ENCODE measurements at regions of chr9 and their contacts with region 1.

Region 1: DNA sequence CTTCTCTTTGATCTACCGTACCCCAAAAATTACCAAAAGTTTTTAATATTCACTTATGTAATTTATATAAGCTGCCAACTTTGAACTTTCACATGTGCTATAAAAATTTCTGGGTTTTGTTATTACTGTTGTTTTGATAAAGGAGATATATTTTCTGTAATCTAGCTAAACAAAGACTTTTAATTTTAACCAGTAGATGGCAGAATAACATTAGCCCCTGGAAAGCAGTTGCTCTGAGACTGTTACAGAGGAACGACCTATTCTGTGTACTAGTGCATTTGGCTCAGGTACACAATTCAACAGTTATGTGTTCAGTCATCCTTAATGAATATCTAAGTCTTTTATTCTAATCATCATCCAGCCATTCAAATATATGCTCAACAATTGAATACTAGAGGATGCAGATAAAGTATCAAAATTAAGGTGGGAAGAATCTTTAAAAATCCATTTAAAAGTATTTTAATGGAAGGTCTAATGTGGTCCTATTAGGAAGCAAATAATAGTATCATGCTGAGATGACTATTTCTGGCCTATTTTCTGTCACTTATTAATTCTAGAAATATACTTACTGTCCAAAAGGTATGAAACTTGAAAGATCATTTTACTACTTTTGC is 8.6 kb downstream of the KLHL9 start:
- DNase-seq: no peak
- H3K4me3 ChIP-seq: no peak overlapping the region
- H3K27ac ChIP-seq: no peak overlapping the region
- H3K4me1 ChIP-seq: peaks cover 0 to 49% (median 13%) of the 10 kb centered on the region in 4 donors
- H3K27me3 ChIP-seq: no peaks in the 10 kb centered on the region
- CTCF ChIP-seq: peak; percentile 60 to 63

Region 2: DNA sequence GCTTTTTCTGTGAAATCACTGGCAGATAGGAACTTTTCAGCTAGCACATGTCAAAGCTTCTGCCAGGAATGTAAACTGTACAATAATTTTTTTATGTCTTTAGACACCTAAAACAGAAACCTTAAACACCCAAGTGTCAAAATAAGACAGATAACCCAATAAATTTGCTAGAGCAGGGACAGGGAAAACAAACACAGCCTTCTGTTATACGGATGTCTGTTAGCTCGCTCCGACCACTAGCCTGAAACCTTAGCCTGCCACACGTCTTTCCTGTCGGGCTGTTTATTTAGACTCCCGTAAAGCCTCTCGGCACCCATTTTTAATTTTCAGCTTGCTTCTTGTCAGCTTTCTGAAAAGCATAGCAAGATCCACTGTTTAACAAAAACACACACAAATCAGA is 1182.4 kb before region 1 on chr9:
- intact Hi-C with region 1: no loop called
- DNase-seq: no peak
- H3K4me3 ChIP-seq: no peak overlapping the region
- H3K27ac ChIP-seq: no peak overlapping the region
- H3K4me1 ChIP-seq: no peaks in the 10 kb centered on the region
- H3K27me3 ChIP-seq: no peaks in the 10 kb centered on the region
- CTCF ChIP-seq: no peak

Region 3: DNA sequence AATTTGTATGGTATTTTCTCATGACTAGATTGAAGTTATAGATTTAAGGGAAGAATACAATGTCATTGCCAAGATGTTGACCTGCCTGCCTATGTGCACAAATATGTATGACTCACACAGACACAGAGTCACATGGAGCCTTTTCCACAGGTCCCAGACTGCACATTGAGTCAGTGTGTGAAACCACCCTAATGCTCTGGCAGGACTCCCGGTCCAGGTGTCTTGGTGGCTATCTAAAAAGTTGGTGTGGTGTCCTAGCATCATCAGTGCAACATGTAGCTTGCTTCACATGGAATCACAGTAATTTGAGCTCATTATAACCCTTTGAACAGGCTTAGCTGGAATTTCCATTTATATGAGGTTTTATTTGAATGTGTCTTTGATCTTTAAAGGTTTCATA is 32.3 kb before region 1 on chr9:
- intact Hi-C with region 1: no loop called
- DNase-seq: no peak
- H3K4me3 ChIP-seq: no peak overlapping the region
- H3K27ac ChIP-seq: no peak overlapping the region
- H3K4me1 ChIP-seq: no peaks in the 10 kb centered on the region
- H3K27me3 ChIP-seq: no peaks in the 10 kb centered on the region
- CTCF ChIP-seq: no peak

Region 4: DNA sequence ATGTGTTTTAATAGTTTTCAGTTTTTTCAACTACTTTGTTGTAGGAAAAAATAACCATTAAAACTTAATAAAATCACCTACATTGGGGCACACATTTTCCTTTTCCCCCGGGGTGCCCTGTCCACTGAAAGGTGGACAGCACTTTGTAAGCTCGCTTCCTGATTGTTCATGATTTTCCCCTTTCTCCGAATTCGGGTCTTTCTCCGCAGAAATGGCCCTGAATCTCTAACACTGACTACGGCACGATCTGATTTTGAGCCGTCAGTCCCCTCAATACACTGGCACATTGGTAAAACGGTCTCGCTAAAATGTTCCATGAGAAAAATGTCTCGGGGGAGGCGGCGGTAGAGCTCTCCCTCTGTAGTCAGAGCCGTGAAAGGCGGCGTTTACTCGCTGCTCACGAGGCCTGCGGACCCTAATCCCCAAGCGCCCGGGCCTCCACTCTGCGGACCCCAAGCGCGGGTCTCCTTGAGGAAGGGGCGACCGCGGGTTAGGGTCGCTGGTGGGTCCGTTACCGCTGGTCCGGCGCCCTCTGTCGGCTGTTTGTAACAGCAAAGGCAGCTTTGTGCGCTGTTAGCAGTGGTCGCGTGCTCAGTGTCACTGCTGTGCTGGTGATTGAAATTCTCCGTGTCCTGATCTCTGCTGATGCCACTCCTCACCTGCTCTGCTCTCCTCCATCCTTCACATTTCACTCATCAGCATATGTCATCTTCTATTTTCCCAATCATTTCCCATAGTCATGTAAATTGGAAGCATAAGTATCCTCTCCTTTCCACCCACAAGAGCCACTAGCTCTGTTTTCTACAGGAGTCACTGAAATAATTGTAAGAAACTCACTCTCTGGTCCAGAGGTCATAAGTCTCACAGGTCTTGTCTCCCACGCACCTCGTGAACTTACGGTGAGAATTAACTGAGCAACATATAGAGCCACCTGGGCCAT is 69.4 kb after region 1 on chr9:
- intact Hi-C with region 1: loop called (anchors 10 kb)
- DNase-seq: peak; percentile 35 to 67
- H3K4me3 ChIP-seq: peak overlapping the region; percentile 37 to 57
- H3K27ac ChIP-seq: no peak overlapping the region
- H3K4me1 ChIP-seq: peaks cover 0 to 8% (median 7%) of the 10 kb centered on the region in 4 donors
- H3K27me3 ChIP-seq: peaks cover 0 to 59% of the 10 kb centered on the region in 2 donors
- CTCF ChIP-seq: peak; percentile 48 to 68

Region 5: GRCh38 chr9:21653091-21653490 is 326.5 kb after region 1 on chr9:
- intact Hi-C with region 1: no loop called
- DNase-seq: no peak
- H3K4me3 ChIP-seq: no peak overlapping the region
- H3K27ac ChIP-seq: no peak overlapping the region
- H3K4me1 ChIP-seq: peaks cover 0 to 6% (median 0%) of the 10 kb centered on the region in 4 donors
- H3K27me3 ChIP-seq: no peaks in the 10 kb centered on the region
- CTCF ChIP-seq: no peak

Region 6: GRCh38 chr9:21789541-21790037 is 463.0 kb after region 1 on chr9:
- intact Hi-C with region 1: loop called (anchors 5 kb)
- DNase-seq: peak in 1 of 2 donors; percentile 76
- H3K4me3 ChIP-seq: no peak overlapping the region
- H3K27ac ChIP-seq: no peak overlapping the region
- H3K4me1 ChIP-seq: no peaks in the 10 kb centered on the region
- H3K27me3 ChIP-seq: peaks cover 0 to 10% of the 10 kb centered on the region in 2 donors
- CTCF ChIP-seq: peak; percentile 75 to 86